T-cell (primary cell): ENCODE measurements at regions of chr6 and their contacts with region 1.

Region 1: DNA sequence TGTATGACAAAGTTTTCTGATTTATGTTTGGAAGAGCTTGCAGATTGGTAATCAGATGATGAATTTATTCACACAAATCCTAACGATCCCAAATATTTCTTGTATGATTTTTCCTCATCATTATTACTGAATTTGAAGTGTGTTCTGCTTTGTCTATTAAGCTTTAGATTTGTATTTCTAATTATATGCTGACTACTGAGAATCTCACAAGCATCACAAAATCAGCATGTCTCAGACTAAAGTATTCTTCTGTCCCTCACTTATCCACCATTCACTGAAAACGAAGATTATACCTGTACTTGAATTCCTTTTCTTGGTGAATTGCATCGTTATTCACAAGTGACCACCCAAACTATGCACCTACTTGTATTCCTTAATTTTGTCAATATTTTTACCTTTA is 796.3 kb upstream of the MAP3K7 start:
- DNase-seq: no peak
- ATAC-seq: no peak
- H3K4me3 ChIP-seq: no peak overlapping the region
- H3K4me3 Mint-ChIP-seq: no peak overlapping the region
- H3K27ac ChIP-seq: no peak overlapping the region
- H3K27ac Mint-ChIP-seq: no peak overlapping the region
- H3K4me1 ChIP-seq: no peaks in the 10 kb centered on the region
- H3K4me1 Mint-ChIP-seq: no peaks in the 10 kb centered on the region
- H3K27me3 ChIP-seq: no peaks in the 10 kb centered on the region
- H3K27me3 Mint-ChIP-seq: no peaks in the 10 kb centered on the region

Region 2: GRCh38 chr6:91475975-91476374 is 92.8 kb after region 1 on chr6:
- CTCF ChIA-PET with region 1: no interaction called
- POLR2A ChIA-PET with region 1: no interaction called
- DNase-seq: no peak
- ATAC-seq: no peak
- H3K4me3 ChIP-seq: no peak overlapping the region
- H3K4me3 Mint-ChIP-seq: no peak overlapping the region
- H3K27ac ChIP-seq: no peak overlapping the region
- H3K27ac Mint-ChIP-seq: no peak overlapping the region
- H3K4me1 ChIP-seq: no peaks in the 10 kb centered on the region
- H3K4me1 Mint-ChIP-seq: no peaks in the 10 kb centered on the region
- H3K27me3 ChIP-seq: no peaks in the 10 kb centered on the region
- H3K27me3 Mint-ChIP-seq: no peaks in the 10 kb centered on the region

Region 3: DNA sequence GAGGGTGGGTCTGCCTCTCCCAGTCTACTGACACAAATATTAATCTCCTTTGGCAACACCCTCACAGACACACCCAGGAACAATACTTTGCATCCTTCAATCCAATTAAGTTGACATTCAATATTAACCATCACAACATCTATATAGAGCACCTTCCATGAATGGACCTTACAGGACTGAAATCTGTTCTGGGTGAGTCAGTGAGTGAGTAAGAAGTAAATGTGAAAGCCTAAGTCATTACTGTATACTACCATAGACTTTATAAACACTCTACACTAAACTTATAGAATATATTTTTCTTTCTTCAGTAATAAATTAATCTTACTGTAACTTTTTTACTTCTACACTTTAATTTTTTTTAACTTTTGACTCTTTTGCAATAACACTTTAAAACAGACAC is 197.4 kb after region 1 on chr6:
- CTCF ChIA-PET with region 1: no interaction called
- POLR2A ChIA-PET with region 1: no interaction called
- DNase-seq: no peak
- ATAC-seq: no peak
- H3K4me3 ChIP-seq: no peak overlapping the region
- H3K4me3 Mint-ChIP-seq: no peak overlapping the region
- H3K27ac ChIP-seq: no peak overlapping the region
- H3K27ac Mint-ChIP-seq: no peak overlapping the region
- H3K4me1 ChIP-seq: no peaks in the 10 kb centered on the region
- H3K4me1 Mint-ChIP-seq: no peaks in the 10 kb centered on the region
- H3K27me3 ChIP-seq: no peaks in the 10 kb centered on the region
- H3K27me3 Mint-ChIP-seq: no peaks in the 10 kb centered on the region

Region 4: GRCh38 chr6:91730710-91731109 is 347.5 kb after region 1 on chr6:
- CTCF ChIA-PET with region 1: interaction called in 1 of 2 experiments, 11 read pairs
- POLR2A ChIA-PET with region 1: no interaction called
- DNase-seq: no peak
- ATAC-seq: no peak
- H3K4me3 ChIP-seq: no peak overlapping the region
- H3K4me3 Mint-ChIP-seq: no peak overlapping the region
- H3K27ac ChIP-seq: no peak overlapping the region
- H3K27ac Mint-ChIP-seq: no peak overlapping the region
- H3K4me1 ChIP-seq: no peaks in the 10 kb centered on the region
- H3K4me1 Mint-ChIP-seq: no peaks in the 10 kb centered on the region
- H3K27me3 ChIP-seq: no peaks in the 10 kb centered on the region
- H3K27me3 Mint-ChIP-seq: no peaks in the 10 kb centered on the region